ENCODE measurements at regions of chr10 and their contacts with region 1.

Region 1: GRCh38 chr10:30783939-30784500 is 154.5 kb upstream of the LYZL2 start:
- DNase-seq: peak; percentile 60
- ATAC-seq: peak; percentile 83
- H3K4me3 ChIP-seq: peak overlapping the region; percentile 86; the same call in 1 of the 2 replicates
- H3K27ac ChIP-seq: peak overlapping the region; percentile 47
- H3K4me1 ChIP-seq: peaks cover 15% of the 10 kb centered on the region
- H3K27me3 ChIP-seq: no peaks in the 10 kb centered on the region
- CTCF ChIP-seq: peak; percentile 88 to 93 (median 89)
- EP300 ChIP-seq: no peak
- POLR2A ChIP-seq: no peak
- RAD21 ChIP-seq: peak; percentile 89

Region 2: GRCh38 chr10:30606313-30606712 is 177.7 kb before region 1 on chr10:
- CTCF ChIA-PET with region 1: no interaction called
- POLR2A ChIA-PET with region 1: no interaction called
- RAD21 ChIA-PET with region 1: no interaction called
- SMC1A ChIA-PET with region 1: no interaction called
- in situ Hi-C with region 1: no loop called
- intact Hi-C with region 1: no loop called
- DNase-seq: no peak
- ATAC-seq: no peak
- H3K4me3 ChIP-seq: no peak overlapping the region
- H3K27ac ChIP-seq: no peak overlapping the region
- H3K4me1 ChIP-seq: no peaks in the 10 kb centered on the region
- H3K27me3 ChIP-seq: no peaks in the 10 kb centered on the region; a peak in 2 of 4 replicates
- CTCF ChIP-seq: no peak
- EP300 ChIP-seq: no peak
- POLR2A ChIP-seq: no peak
- RAD21 ChIP-seq: no peak

Region 3: GRCh38 chr10:30687698-30688219 is 96.3 kb before region 1 on chr10:
- CTCF ChIA-PET with region 1: interaction called, 11 read pairs
- POLR2A ChIA-PET with region 1: no interaction called
- RAD21 ChIA-PET with region 1: interaction called, 16 read pairs
- SMC1A ChIA-PET with region 1: interaction called, 24 read pairs
- in situ Hi-C with region 1: no loop called
- intact Hi-C with region 1: loop called (anchors 5 kb)
- DNase-seq: no peak
- ATAC-seq: peak; percentile 97
- H3K4me3 ChIP-seq: no peak overlapping the region
- H3K27ac ChIP-seq: no peak overlapping the region
- H3K4me1 ChIP-seq: peaks cover 5% of the 10 kb centered on the region; the same call in 1 of the 2 replicates
- H3K27me3 ChIP-seq: no peaks in the 10 kb centered on the region
- CTCF ChIP-seq: peak; percentile 88 to 93 (median 89)
- EP300 ChIP-seq: no peak
- POLR2A ChIP-seq: no peak
- RAD21 ChIP-seq: peak; percentile 90

Region 4: DNA sequence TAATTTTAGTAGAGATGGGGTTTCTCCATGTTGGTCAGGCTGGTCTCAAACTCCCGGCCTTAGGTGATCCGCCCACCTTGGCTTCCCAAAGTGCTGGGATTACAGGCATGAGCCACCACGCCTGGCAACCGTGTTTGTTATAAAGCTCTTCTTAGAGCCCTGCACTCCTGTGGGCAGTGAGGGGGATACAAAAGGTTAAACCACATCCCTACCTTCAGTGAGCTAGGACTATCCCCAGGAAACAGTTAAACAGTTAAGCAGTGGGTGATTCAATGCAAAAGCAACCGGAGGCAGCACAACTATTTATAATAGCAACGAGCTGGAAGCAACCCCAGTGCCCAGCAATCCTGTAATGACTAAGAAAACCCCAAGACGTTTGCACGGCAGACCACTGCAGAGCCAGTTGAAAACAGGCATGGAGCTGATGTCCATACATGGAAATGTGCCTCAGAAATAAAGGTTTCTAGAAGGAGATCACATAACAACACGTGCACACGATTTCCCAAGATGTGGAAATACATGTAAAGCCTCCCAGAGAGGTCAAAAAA is 47.3 kb before region 1 on chr10:
- CTCF ChIA-PET with region 1: interaction called, 7 read pairs
- POLR2A ChIA-PET with region 1: interaction called, 5 read pairs
- RAD21 ChIA-PET with region 1: interaction called, 9 read pairs
- SMC1A ChIA-PET with region 1: interaction called, 16 read pairs
- in situ Hi-C with region 1: no loop called
- intact Hi-C with region 1: loop called (anchors 2 kb)
- DNase-seq: peak; percentile 94
- ATAC-seq: peak; percentile 85
- H3K4me3 ChIP-seq: no peak overlapping the region
- H3K27ac ChIP-seq: peak overlapping the region; percentile 91
- H3K4me1 ChIP-seq: peaks cover 25% of the 10 kb centered on the region
- H3K27me3 ChIP-seq: no peaks in the 10 kb centered on the region
- CTCF ChIP-seq: no peak
- EP300 ChIP-seq: peak; percentile 88 to 95
- POLR2A ChIP-seq: no peak
- RAD21 ChIP-seq: no peak

Region 5: DNA sequence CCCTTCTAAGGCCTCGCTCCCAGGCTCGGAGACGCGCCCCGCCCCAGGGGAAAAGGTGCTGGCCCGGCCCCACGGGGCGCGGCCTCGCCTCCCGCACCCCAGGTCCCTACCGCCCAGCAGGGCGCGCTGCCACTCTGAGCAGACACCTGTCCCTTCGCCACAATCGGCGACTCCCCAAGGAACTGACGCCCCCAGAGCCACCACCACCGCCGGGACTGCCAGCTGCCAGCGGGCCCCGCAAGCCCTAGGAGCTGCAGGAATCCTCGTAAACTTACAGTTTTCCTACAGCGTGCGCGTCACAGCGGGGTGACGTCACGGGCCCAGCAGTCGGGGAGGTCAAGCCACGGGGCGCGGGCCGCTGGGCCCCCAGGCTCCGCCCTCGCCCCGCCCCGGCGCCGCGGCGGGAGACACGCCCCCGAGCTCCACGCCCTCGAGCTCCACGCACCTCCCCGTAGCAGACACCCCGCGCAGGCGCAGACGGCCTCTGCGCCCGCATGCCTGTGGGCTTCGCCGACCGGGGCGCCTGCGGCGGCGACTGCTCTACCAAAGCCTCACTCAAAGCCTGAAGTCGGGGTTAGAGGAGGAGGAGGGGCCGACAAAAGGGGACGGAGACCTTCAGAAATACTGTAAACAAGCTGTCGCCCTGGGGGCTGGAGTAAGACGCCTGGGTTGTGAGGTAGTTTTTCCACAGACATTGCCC is 247.7 kb after region 1 on chr10 and contains the start of gene ZNF438:
- CTCF ChIA-PET with region 1: interaction called, 17 read pairs
- POLR2A ChIA-PET with region 1: no interaction called
- RAD21 ChIA-PET with region 1: interaction called, 15 read pairs
- SMC1A ChIA-PET with region 1: interaction called, 9 read pairs
- in situ Hi-C with region 1: no loop called
- intact Hi-C with region 1: loop called (anchors 5 kb)
- DNase-seq: peak; percentile 68
- ATAC-seq: peak; percentile 90
- H3K4me3 ChIP-seq: peak within 1 kb of the TSS; percentile 75
- H3K27ac ChIP-seq: peak within 1 kb of the TSS; percentile 97
- H3K4me1 ChIP-seq: peaks cover 2% of the 10 kb centered on the region; the same call in 1 of the 2 replicates
- H3K27me3 ChIP-seq: no peaks in the 10 kb centered on the region
- CTCF ChIP-seq: peak; percentile 69 to 80 (median 71)
- EP300 ChIP-seq: peak in 1 of 2 experiments; percentile 64; a peak in 1 of 4 replicates
- POLR2A ChIP-seq: peak; percentile 79
- RAD21 ChIP-seq: peak; percentile 39; the same call in 1 of the 2 replicates
- polyA plus RNA-seq, gene ZNF438: 0.93 to 0.99 TPM

Region 6: GRCh38 chr10:31318854-31319601 is 535.0 kb after region 1 on chr10 and contains the start of gene ZEB1:
- CTCF ChIA-PET with region 1: interaction called, 3 read pairs
- POLR2A ChIA-PET with region 1: interaction called, 6 read pairs
- RAD21 ChIA-PET with region 1: interaction called, 3 read pairs
- SMC1A ChIA-PET with region 1: interaction called, 4 read pairs
- in situ Hi-C with region 1: no loop called
- intact Hi-C with region 1: loop called (anchors 1 kb)
- DNase-seq: no peak
- ATAC-seq: peak; percentile 52
- H3K4me3 ChIP-seq: peak within 1 kb of the TSS; percentile 84
- H3K27ac ChIP-seq: peak within 1 kb of the TSS; percentile 100
- H3K4me1 ChIP-seq: peaks cover 7% of the 10 kb centered on the region
- H3K27me3 ChIP-seq: no peaks in the 10 kb centered on the region
- CTCF ChIP-seq: peak; percentile 29 to 53 (median 31); a peak in 4 of 6 replicates
- EP300 ChIP-seq: peak in 1 of 2 experiments; percentile 41; a peak in 1 of 4 replicates
- POLR2A ChIP-seq: peak; percentile 78
- RAD21 ChIP-seq: 0 out of 2 replicates have a peak, but pooled peaks have one; percentile 8
- polyA plus RNA-seq, gene ZEB1: 10.4 to 16.8 TPM

Region 7: DNA sequence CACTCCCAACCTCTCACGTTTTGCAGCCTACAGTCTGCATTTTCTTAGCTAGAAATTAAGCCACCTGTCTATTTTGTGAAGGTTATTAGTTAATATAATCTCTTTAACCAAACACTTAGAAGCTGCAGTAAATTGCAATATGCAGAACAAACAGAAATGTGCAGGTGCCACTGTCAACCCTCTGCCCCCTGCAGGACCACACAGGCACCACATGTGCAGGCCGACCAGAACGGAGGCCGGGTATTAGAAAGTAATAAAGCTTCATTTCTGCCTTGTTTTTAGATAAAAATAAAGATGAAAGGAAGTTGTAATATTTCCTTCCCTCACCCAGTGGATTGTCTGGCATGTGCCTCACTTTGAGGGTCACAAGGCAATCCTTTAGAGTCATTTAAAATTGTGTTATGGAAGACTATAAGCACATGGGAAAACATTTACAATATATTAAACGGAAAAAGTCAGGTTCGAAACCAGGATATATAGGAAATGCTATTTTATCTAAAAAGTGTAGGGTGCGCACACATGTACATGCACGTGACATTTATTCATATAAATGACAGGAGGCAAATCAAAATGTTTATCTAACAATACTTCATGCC is 986.4 kb after region 1 on chr10:
- CTCF ChIA-PET with region 1: interaction called, 24 read pairs
- POLR2A ChIA-PET with region 1: no interaction called
- RAD21 ChIA-PET with region 1: interaction called, 7 read pairs
- SMC1A ChIA-PET with region 1: interaction called, 13 read pairs
- in situ Hi-C with region 1: no loop called
- intact Hi-C with region 1: loop called (anchors 1 kb)
- DNase-seq: no peak
- ATAC-seq: peak; percentile 92
- H3K4me3 ChIP-seq: no peak overlapping the region
- H3K27ac ChIP-seq: no peak overlapping the region
- H3K4me1 ChIP-seq: no peaks in the 10 kb centered on the region
- H3K27me3 ChIP-seq: no peaks in the 10 kb centered on the region
- CTCF ChIP-seq: peak; percentile 79 to 88 (median 86)
- EP300 ChIP-seq: no peak
- POLR2A ChIP-seq: no peak
- RAD21 ChIP-seq: peak; percentile 86

Measured in GM12878 (cell line).